Gastrocnemius medialis (tissue), 4 donors: ENCODE measurements at regions of chr15 and their contacts with region 1.

Region 1: DNA sequence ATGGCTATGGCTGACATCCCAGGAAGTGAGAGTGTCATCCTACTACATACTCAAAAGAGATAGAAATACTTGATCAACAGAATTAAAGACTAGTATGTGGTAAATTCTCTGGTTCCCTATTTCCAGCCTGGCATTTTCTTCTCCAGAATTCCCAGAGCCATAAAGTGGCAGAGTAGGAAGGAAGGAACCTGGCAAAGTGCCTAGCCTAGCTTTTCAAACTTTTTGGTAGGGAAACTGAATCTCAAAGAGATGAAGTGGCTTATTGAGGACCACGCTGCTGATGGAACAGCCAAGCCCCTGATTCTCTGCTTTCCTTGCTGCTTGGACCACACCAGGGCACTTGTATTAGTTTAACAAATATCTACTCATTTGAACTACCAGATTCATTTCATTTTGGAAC is 312.4 kb upstream of the RORA start:
- DNase-seq: no peak
- ATAC-seq: no peak
- H3K4me3 ChIP-seq: no peak overlapping the region
- H3K27ac ChIP-seq: no peak overlapping the region
- H3K4me1 ChIP-seq: no peaks in the 10 kb centered on the region
- H3K27me3 ChIP-seq: no peaks in the 10 kb centered on the region
- CTCF ChIP-seq: no peak
- POLR2A ChIP-seq: no peak

Region 2: DNA sequence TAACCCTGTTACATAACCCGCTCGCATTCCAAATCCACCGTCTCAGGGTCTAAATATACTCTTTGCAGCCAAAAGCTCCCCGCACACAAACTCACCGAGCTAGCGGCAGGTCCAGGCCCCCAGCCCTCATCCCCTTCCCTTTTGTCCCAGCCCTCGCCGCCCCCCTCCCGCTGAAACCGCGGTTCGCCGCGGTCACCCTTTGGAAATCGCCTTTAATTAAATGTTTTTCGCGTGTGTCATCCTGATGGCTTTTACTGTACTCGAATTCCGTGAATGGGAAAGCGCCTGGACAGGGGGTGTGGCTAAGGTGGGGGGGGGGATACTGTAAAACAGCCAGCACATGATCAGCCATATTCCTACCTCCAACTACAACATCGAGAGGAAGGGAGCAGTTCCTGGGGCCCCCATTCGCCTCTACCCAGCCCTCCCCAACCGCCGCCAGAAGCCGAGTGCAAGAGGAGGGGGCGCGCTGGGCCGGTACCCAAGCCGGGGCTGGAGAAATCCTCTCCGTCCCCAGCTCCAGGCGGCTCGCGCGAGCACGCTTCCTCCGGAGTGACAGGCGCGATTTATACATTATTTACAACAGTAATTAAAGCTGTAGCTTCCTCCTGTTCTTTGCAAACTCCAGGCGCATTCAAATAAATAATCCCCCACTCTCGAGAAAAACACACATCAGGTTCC is 314.1 kb before region 1 on chr15:
- in situ Hi-C with region 1: no loop called
- intact Hi-C with region 1: no loop called
- DNase-seq: peak in 1 of 2 donors; percentile 24
- ATAC-seq: peak in 1 of 2 donors; percentile 46
- H3K4me3 ChIP-seq: peak overlapping the region; percentile 64 to 92 (median 86)
- H3K27ac ChIP-seq: peak overlapping the region; percentile 81 to 87 (median 81)
- H3K4me1 ChIP-seq: peaks cover 38 to 43% of the 10 kb centered on the region in 2 donors
- H3K27me3 ChIP-seq: no peaks in the 10 kb centered on the region
- CTCF ChIP-seq: no peak
- POLR2A ChIP-seq: peak in 1 of 2 donors; percentile 9

Region 3: GRCh38 chr15:61426466-61426865 is 115.0 kb before region 1 on chr15:
- in situ Hi-C with region 1: no loop called
- intact Hi-C with region 1: no loop called
- DNase-seq: no peak
- ATAC-seq: no peak
- H3K4me3 ChIP-seq: no peak overlapping the region
- H3K27ac ChIP-seq: no peak overlapping the region
- H3K4me1 ChIP-seq: no peaks in the 10 kb centered on the region
- H3K27me3 ChIP-seq: no peaks in the 10 kb centered on the region
- CTCF ChIP-seq: no peak
- POLR2A ChIP-seq: no peak

Region 4: DNA sequence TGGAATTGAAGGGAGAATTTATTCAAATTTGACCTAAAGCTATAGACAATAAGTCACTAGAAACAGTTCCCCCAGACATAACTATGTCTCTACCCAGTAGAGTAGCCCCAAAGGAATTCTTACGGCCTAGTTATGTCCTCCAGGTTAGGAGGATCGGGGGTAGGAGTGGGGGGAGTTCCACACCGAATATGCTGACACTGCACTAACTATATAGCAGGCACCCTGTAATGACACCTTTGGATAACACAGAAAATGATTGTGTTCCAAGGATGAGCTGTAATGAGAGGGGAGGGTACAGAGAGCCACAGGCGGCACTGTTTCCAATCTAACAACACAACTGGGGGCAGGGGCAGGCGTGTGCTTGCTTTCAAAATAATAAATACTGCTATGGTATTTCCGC is 63.8 kb after region 1 on chr15:
- in situ Hi-C with region 1: loop called in 1 of 4 experiments (anchors 10 kb)
- intact Hi-C with region 1: no loop called
- DNase-seq: no peak
- ATAC-seq: no peak
- H3K4me3 ChIP-seq: no peak overlapping the region
- H3K27ac ChIP-seq: no peak overlapping the region
- H3K4me1 ChIP-seq: no peaks in the 10 kb centered on the region
- H3K27me3 ChIP-seq: no peaks in the 10 kb centered on the region
- CTCF ChIP-seq: no peak
- POLR2A ChIP-seq: no peak

Region 5: GRCh38 chr15:61644550-61644949 is 103.0 kb after region 1 on chr15:
- in situ Hi-C with region 1: no loop called
- intact Hi-C with region 1: no loop called
- DNase-seq: no peak
- ATAC-seq: no peak
- H3K4me3 ChIP-seq: no peak overlapping the region
- H3K27ac ChIP-seq: no peak overlapping the region
- H3K4me1 ChIP-seq: peaks cover 4 to 7% of the 10 kb centered on the region in 2 donors
- H3K27me3 ChIP-seq: no peaks in the 10 kb centered on the region
- CTCF ChIP-seq: no peak
- POLR2A ChIP-seq: no peak